PC-9 (cell line): ENCODE measurements at regions of chr9 and their contacts with region 1.

Region 1: DNA sequence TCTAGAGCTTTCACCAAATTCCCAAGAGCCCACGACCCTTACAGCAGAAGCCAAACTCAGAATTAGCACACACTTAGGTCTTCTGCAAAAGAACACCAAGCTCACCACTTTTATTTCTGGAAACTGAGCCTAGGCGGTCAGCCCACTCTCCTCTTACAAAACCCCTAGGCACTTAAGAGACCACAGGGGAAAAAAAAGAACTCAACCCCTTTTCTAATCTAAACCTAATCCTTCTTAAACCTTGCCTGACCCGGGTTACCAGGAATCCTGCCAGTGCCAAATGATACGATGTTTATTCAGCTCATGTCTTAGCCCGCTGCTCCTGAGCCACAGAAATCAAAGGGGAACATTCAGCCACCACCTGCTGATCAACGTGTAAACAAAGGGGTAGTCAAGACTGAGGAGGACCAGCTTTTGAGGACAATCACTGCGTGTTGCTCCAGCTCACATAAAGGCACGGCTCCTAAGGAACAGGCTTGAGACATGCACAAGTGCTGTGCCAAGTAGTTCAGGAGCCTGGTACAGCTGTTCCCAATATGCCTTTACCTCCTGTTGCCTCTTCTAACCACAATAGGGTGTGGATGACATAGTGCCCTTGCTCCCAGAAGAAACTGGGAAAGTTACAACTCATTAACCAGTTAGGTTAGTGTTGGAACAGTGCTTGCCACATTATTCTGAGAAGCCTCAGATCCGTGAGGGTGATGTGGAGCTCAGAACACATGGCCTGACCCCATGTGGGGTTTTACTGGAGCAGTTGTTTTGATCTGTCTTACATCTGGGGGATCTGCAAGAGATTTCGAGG is 49.3 kb downstream of the ZFAND5 start:
- DNase-seq: peak; percentile 68 to 92
- H3K4me3 ChIP-seq: peak overlapping the region; percentile 36; the same call in 1 of the 2 replicates
- H3K27ac ChIP-seq: peak overlapping the region; percentile 70
- H3K4me1 ChIP-seq: peaks cover 39% of the 10 kb centered on the region
- H3K27me3 ChIP-seq: no peaks in the 10 kb centered on the region
- CTCF ChIP-seq: no peak

Region 2: DNA sequence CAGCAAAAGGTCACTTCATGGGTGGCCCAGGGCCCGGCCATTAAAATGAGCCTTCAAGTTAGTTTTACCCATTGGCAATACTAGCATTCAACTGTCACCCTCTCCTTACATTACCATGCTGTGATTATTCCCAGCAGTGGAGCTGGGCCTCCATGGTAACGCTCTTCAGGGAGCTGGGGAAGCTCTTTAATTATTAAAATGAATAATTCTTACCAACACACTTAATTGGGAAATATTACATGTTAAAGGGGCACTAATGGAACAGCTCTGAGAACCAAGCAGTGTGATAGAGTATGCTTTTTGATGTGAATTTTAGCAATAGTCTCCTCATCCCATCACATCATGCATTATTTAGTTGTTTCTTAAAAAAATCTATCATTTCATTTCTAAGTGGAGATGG is 734.6 kb before region 1 on chr9:
- CTCF ChIA-PET with region 1: interaction called, 12 read pairs
- POLR2A ChIA-PET with region 1: no interaction called
- intact Hi-C with region 1: no loop called
- DNase-seq: no peak
- H3K4me3 ChIP-seq: no peak overlapping the region
- H3K27ac ChIP-seq: no peak overlapping the region
- H3K4me1 ChIP-seq: no peaks in the 10 kb centered on the region
- H3K27me3 ChIP-seq: no peaks in the 10 kb centered on the region
- CTCF ChIP-seq: no peak

Region 3: GRCh38 chr9:72305102-72305546 is 10.6 kb before region 1 on chr9:
- CTCF ChIA-PET with region 1: no interaction called
- POLR2A ChIA-PET with region 1: interaction called, 10 read pairs
- intact Hi-C with region 1: no loop called
- DNase-seq: peak; percentile 88 to 91
- H3K4me3 ChIP-seq: peak overlapping the region; percentile 25; the same call in 1 of the 2 replicates
- H3K27ac ChIP-seq: no peak overlapping the region
- H3K4me1 ChIP-seq: no peaks in the 10 kb centered on the region
- H3K27me3 ChIP-seq: no peaks in the 10 kb centered on the region
- CTCF ChIP-seq: no peak

Region 4: GRCh38 chr9:72509635-72510034 is 193.9 kb after region 1 on chr9:
- CTCF ChIA-PET with region 1: no interaction called
- POLR2A ChIA-PET with region 1: interaction called, 10 read pairs
- intact Hi-C with region 1: no loop called
- DNase-seq: peak in 1 of 2 experiments; percentile 44
- H3K4me3 ChIP-seq: no peak overlapping the region
- H3K27ac ChIP-seq: peak overlapping the region; percentile 86
- H3K4me1 ChIP-seq: peaks cover 33% of the 10 kb centered on the region
- H3K27me3 ChIP-seq: no peaks in the 10 kb centered on the region
- CTCF ChIP-seq: no peak

Region 5: DNA sequence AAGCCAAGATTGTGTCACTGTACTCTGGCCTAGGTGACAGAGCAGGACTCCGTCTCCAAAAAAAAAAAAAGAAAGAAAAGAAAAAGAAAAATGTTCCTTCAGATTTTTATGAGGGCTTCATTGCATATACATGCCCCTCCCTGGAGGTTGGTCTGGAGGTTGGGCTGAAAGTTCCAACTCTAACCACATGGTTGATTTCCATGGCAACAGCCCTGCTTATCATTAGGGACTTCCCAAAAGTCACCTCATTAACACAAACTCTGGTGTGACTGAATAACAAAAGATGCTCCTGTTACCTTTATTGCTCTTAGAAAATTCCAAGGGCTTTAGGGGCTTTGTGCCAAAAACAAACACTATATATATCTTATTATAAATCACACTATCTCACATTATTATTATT is 319.5 kb after region 1 on chr9:
- CTCF ChIA-PET with region 1: no interaction called
- POLR2A ChIA-PET with region 1: interaction called, 11 read pairs
- intact Hi-C with region 1: no loop called
- DNase-seq: no peak
- H3K4me3 ChIP-seq: no peak overlapping the region
- H3K27ac ChIP-seq: no peak overlapping the region
- H3K4me1 ChIP-seq: no peaks in the 10 kb centered on the region
- H3K27me3 ChIP-seq: no peaks in the 10 kb centered on the region
- CTCF ChIP-seq: no peak